ENCODE measurements at regions of chr2 and their contacts with region 1.

Region 1: GRCh38 chr2:30115141-30115980 is 31.4 kb upstream of the YPEL5 start:
- DNase-seq: no peak
- H3K4me3 ChIP-seq: no peak overlapping the region
- H3K27me3 ChIP-seq: peaks cover 9% of the 10 kb centered on the region
- CTCF ChIP-seq: peak; percentile 96

Region 2: DNA sequence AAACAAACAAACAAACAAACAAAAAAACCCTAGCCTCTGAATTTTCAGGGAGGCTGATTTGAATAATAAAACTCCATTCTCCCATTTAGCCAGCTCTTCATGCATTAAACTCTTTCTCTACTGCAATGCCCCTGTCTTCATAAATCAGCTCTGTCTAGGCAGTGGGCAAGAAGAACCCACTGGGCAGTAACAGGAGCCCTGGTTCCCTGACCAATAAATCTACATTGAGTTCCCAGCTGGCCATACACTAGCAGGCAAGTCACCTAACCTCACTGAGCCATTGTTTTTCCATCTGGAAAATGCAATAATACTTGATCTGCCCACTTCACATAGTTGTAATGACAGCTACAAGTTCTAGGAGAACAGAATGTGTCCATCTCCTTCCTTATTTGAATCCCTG is 26.2 kb before region 1 on chr2:
- CTCF ChIA-PET with region 1: interaction called, 194 read pairs
- POLR2A ChIA-PET with region 1: no interaction called
- DNase-seq: no peak
- H3K4me3 ChIP-seq: no peak overlapping the region
- H3K27me3 ChIP-seq: peaks cover 26% of the 10 kb centered on the region
- CTCF ChIP-seq: no peak

Region 3: GRCh38 chr2:30098266-30099005 is 16.9 kb before region 1 on chr2:
- CTCF ChIA-PET with region 1: interaction called, 62 read pairs
- POLR2A ChIA-PET with region 1: no interaction called
- DNase-seq: no peak
- H3K4me3 ChIP-seq: no peak overlapping the region
- H3K27me3 ChIP-seq: peaks cover 6% of the 10 kb centered on the region; the same call in 1 of the 2 replicates
- CTCF ChIP-seq: no peak

Region 4: DNA sequence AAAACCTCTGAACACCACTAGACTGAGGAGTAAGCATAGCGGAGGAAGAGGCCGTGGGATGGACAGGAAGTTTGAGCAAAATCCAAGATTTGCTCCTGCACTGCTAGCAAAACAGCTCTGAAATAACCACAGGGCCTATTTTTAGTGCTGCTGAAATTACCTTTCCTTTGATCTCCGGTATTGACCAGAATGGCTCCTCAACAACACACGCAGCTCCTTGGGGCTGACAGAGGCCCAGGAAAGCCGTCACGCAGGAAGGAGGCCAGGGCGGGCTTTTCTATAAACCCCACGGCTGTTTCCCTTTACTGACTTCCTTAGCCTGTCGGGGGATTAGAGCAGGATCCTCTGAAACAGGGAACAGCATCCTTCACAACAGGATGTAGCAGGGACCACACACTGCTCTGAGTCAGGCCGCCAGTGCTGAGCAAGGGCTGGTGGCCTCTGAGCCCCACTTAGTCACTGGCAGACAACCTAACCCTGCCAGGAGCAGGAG is 250.9 kb after region 1 on chr2:
- CTCF ChIA-PET with region 1: no interaction called
- POLR2A ChIA-PET with region 1: no interaction called
- DNase-seq: no peak
- H3K4me3 ChIP-seq: no peak overlapping the region
- H3K27me3 ChIP-seq: no peaks in the 10 kb centered on the region
- CTCF ChIP-seq: no peak

Measured in BJ (cell line).